Spleen (tissue), 13 donors: ENCODE measurements at regions of chr10 and their contacts with region 1.

Region 1: GRCh38 chr10:511101-511848 is 178.2 kb downstream of the DIP2C start:
- DNase-seq: peak; percentile 94
- H3K4me3 ChIP-seq: no peak overlapping the region
- H3K27ac ChIP-seq: no peak overlapping the region
- H3K4me1 ChIP-seq: peaks cover 0 to 31% (median 10%) of the 10 kb centered on the region in 6 donors
- H3K27me3 ChIP-seq: peaks cover 0 to 5% (median 0%) of the 10 kb centered on the region in 7 donors
- CTCF ChIP-seq: peak; percentile 84 to 97 (median 93)
- POLR2A ChIP-seq: no peak

Region 2: DNA sequence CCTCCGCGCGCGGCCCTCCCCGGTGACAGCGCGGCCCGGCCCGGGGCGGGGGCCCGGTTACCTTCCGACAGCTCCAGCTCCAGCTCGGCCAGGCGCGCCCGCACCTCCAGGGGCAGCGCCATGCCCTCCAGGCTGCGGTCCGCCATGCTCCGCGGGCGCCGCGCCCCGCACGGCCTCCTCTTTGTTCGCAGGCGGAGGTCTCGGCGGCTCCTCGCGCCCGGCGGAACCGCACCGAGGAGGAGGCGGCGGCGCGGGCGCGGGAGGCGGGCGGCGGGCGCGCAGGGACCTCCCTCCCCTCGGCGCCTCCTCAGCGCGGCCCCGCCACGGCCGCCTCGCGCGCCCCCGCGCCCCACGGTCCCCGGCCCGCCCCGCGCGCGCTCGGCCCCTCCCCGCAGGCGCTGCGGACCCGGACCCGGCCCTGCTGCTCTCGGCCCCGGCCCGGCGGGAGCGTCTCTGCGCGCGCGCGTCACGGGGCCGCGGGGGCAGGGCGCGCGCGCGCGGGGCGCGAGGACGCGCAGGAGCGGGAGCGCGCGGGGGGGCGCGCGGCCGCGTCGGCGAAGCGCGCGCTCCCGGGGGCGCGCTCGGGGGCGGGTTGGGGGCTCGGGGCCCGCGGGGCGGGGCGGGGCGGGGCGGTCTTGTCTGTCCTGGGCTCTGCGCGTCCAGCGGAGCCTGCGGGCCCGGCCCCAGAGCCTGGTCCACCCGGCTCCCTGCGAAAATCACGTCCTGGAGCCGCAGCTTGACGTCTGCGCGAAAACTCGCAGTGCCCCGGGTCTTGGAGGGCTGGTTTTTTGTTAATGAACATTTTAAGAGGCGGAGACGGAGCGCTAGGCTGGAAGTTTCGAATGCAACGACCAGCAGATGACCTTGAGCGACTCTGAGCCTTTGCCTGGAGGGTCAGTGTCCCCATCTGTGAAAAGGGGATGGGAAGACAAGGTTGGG is 178.4 kb after region 1 on chr10 and contains the start of gene DIP2C:
- intact Hi-C with region 1: loop called (anchors 10 kb)
- DNase-seq: no peak
- H3K4me3 ChIP-seq: peak within 1 kb of the TSS; percentile 40 to 72 (median 52)
- H3K27ac ChIP-seq: peak within 1 kb of the TSS in 7 of 8 donors; percentile 65 to 78 (median 76)
- H3K4me1 ChIP-seq: peaks cover 0 to 27% (median 10%) of the 10 kb centered on the region in 6 donors
- H3K27me3 ChIP-seq: peaks cover 0 to 81% (median 14%) of the 10 kb centered on the region in 7 donors
- CTCF ChIP-seq: no peak
- POLR2A ChIP-seq: no peak
- total RNA-seq, gene DIP2C: 6.9 to 13.1 (median 10.3) TPM

Region 3: GRCh38 chr10:784403-785088 is 273.3 kb after region 1 on chr10:
- intact Hi-C with region 1: loop called (anchors 5 kb)
- DNase-seq: peak; percentile 74
- H3K4me3 ChIP-seq: peak overlapping the region in 5 of 8 donors; percentile 3 to 51 (median 11)
- H3K27ac ChIP-seq: no peak overlapping the region
- H3K4me1 ChIP-seq: peaks cover 3 to 42% (median 24%) of the 10 kb centered on the region in 6 donors
- H3K27me3 ChIP-seq: peaks cover 0 to 77% (median 23%) of the 10 kb centered on the region in 7 donors
- CTCF ChIP-seq: no peak
- POLR2A ChIP-seq: no peak